ENCODE measurements at regions of chr11 and their contacts with region 1.

Region 1: GRCh38 chr11:58513747-58514367 is 6.0 kb upstream of the OR5B21 start:
- DNase-seq: peak; percentile 41
- ATAC-seq: peak; percentile 44
- H3K4me3 Mint-ChIP-seq: no peak overlapping the region
- H3K27ac Mint-ChIP-seq: no peak overlapping the region
- H3K4me1 Mint-ChIP-seq: peaks cover 4% of the 10 kb centered on the region
- H3K27me3 Mint-ChIP-seq: no peaks in the 10 kb centered on the region

Region 2: DNA sequence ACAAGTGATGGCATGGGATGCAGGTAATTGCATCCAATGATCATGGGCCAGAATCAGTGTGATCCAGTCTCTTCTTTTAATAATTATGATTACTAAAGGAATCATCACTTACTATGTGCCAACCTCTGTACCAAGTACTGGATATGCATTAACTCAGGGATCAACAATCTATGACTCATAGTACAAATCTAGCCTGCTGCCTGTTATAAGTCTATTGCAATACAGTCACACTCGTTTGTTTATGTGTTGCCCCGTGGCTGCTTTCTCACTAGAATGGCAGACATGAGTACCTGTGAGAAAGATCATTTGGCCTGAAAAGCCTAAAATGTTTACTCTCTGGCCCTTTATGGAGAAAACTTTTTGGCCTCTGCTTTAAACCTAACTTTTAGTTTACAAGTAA is 438.1 kb before region 1 on chr11:
- CTCF ChIA-PET with region 1: no interaction called
- POLR2A ChIA-PET with region 1: no interaction called
- intact Hi-C with region 1: loop called in 1 of 2 experiments (anchors 10 kb)
- DNase-seq: no peak
- ATAC-seq: no peak
- H3K4me3 Mint-ChIP-seq: no peak overlapping the region
- H3K27ac Mint-ChIP-seq: no peak overlapping the region
- H3K4me1 Mint-ChIP-seq: no peaks in the 10 kb centered on the region
- H3K27me3 Mint-ChIP-seq: peaks cover 5% of the 10 kb centered on the region

Region 3: DNA sequence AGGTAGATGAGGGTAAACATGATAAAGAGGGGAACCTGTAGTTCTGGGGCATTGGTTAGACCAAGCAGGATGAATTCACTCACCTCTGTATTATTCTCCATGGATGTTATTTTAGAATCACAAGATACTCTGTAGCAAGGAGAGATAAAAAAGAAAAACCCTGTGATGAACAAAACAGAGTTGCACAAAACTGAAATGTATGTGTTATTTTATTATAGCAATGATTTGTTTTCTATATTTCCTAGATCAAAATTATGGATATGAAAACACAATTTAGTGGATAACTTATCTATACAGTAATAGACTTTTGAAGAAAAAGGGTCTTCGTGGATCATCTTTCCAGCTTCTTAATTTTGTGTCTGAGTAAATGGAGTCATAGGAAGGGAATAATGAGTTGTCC is 154.9 kb before region 1 on chr11 and contains the start of gene OR5B17:
- CTCF ChIA-PET with region 1: no interaction called
- POLR2A ChIA-PET with region 1: no interaction called
- intact Hi-C with region 1: no loop called
- DNase-seq: no peak
- ATAC-seq: no peak
- H3K4me3 Mint-ChIP-seq: no peak within 1 kb of the TSS
- H3K27ac Mint-ChIP-seq: no peak within 1 kb of the TSS
- H3K4me1 Mint-ChIP-seq: no peaks in the 10 kb centered on the region
- H3K27me3 Mint-ChIP-seq: peaks cover 15% of the 10 kb centered on the region
- total RNA-seq, gene OR5B17: not detected

Measured in activated CD4-positive, alpha-beta T cell treated with anti-CD3 and anti-CD28 coated beads for 36 hours (primary cell).